PC-9 (cell line): ENCODE measurements at regions of chr3 and their contacts with region 1.

Region 1: DNA sequence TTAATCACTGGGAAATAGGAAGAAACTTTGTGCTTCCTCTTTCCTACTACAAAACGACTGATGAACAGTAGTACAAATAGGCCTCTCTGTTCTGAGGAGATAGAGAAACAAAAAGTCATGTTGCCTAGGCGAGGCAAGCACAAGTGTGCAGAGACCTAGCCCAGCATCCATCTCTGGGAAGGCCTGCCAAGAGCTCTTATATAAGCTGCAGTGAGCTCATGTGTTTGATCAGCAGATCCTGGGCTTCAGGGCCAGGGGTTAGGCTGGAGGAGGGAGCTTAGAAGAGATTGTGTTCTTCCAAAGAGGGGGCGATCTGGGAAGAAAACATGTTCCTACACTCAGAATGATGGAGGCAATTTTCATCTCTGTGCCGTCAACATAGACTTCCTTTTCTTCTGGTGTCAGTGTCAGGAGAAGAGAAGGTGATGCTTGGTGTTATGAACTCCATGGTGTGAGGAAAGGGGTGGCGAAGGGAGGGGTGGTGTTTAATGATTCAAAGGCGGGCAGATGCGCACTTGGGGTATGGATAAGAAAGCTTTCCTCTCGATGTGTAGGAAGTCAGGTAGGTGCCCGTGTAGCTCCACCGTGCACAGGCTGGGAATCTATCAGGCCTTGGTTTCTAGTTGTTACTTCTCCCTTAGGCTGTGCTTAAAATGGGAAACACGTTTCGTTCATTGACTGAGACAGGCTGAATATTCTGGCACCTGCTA is 29.5 kb upstream of the ETV5 start:
- DNase-seq: no peak
- H3K4me3 ChIP-seq: no peak overlapping the region
- H3K27ac ChIP-seq: no peak overlapping the region
- H3K4me1 ChIP-seq: no peaks in the 10 kb centered on the region
- H3K27me3 ChIP-seq: no peaks in the 10 kb centered on the region
- CTCF ChIP-seq: no peak

Region 2: DNA sequence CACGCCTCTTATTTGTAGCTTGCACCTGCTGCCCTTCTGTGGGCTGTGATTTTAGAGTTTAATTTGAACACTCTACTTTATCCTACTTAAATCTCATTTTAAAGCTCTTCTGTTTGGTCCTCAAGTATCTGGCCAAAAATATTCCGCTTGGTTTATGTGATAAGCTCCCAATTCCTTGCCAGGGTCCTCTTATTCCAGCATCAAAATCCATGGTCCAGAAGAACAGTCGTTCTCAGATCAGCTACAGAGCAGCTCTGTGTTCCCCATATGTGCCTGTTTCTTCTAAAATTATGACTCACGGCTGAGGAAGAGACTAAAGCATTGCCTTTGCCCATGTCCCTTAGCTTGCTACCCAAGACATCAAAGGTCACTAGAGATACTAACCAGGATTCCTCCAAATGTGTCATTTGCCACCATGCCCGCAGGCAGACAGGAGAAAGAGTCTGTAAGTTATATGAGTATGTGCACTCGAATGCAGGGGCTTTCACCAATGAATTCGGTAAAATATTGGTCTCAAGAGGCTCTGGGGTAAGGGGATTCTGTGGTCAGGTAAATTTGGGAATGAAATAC is 85.7 kb after region 1 on chr3:
- CTCF ChIA-PET with region 1: no interaction called
- POLR2A ChIA-PET with region 1: interaction called, 12 read pairs
- intact Hi-C with region 1: no loop called
- DNase-seq: no peak
- H3K4me3 ChIP-seq: no peak overlapping the region
- H3K27ac ChIP-seq: no peak overlapping the region
- H3K4me1 ChIP-seq: no peaks in the 10 kb centered on the region
- H3K27me3 ChIP-seq: no peaks in the 10 kb centered on the region
- CTCF ChIP-seq: no peak

Region 3: GRCh38 chr3:186320862-186321568 is 182.6 kb after region 1 on chr3:
- CTCF ChIA-PET with region 1: no interaction called
- POLR2A ChIA-PET with region 1: no interaction called
- intact Hi-C with region 1: no loop called
- DNase-seq: no peak
- H3K4me3 ChIP-seq: no peak overlapping the region
- H3K27ac ChIP-seq: no peak overlapping the region
- H3K4me1 ChIP-seq: no peaks in the 10 kb centered on the region
- H3K27me3 ChIP-seq: peaks cover 93% of the 10 kb centered on the region
- CTCF ChIP-seq: no peak

Region 4: GRCh38 chr3:188092648-188093047 is 1954.2 kb after region 1 on chr3:
- CTCF ChIA-PET with region 1: no interaction called
- POLR2A ChIA-PET with region 1: interaction called, 16 read pairs
- intact Hi-C with region 1: no loop called
- DNase-seq: no peak
- H3K4me3 ChIP-seq: no peak overlapping the region
- H3K27ac ChIP-seq: no peak overlapping the region
- H3K4me1 ChIP-seq: no peaks in the 10 kb centered on the region
- H3K27me3 ChIP-seq: no peaks in the 10 kb centered on the region
- CTCF ChIP-seq: no peak